ENCODE measurements at regions of chrX and their contacts with region 1.

Region 1: DNA sequence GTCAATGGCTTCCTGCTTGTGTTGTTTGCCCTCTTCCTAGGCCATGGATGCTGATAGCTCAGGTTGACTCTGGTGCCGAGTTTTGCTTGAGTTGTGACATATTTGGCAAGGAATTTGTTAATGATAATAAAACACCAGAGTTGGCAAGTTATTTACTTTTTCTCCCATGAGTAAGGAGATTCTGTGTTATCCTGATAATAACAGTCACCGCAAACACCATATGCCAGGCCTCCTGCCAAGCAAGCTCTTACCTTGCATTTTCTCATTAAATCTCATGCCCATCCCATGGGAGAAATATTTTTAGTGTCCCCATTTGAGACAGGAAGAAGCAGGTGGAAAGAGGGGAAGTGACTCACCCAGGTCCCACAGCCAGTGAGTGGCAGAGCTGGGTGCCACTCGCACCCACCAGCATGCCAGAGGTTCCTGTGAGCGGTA is 67.4 kb upstream of the CLCN4 start:
- DNase-seq: peak; percentile 9
- H3K4me3 ChIP-seq: no peak overlapping the region
- H3K27ac ChIP-seq: peak overlapping the region; percentile 48
- H3K4me1 ChIP-seq: peaks cover 28% of the 10 kb centered on the region
- H3K27me3 ChIP-seq: no peaks in the 10 kb centered on the region
- CTCF ChIP-seq: no peak
- POLR2A ChIP-seq: no peak

Region 2: DNA sequence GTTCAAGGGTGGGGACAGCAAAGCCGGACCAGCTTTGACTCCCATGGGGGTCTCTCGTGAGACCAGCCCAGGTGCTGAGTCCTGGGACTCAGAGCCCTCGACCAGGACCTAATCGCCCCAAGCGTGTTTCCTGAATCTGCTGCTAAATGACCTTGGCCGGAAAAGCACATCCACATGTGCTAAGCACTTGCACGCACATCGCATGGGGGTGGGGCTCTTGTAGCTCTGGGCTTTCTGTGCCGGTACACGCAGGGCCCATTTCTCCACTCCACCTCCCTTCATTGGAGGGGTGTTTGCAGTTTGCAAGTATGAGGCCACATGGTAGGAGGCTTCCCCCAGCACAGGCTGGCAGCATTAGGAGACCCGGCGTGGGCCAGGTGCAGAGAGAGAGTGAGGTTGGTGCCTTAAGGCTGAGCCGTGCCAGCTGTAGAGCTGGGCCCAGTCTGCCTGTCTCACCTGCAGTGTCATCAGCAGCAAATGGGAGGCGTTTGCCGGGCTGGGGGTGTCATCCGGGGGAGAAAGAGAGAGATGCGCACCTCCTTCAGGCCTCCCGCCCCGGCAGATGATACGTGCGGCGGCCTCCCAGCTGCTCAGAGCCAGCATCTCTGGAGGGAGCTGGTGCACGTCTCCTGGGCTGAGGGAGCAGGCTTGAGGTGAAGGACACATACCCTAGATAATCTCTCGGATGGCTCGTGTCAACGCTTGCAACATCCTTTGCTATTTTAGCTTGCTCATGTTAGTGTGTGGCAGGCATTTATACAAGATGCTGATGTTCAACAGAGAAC is 22.2 kb after region 1 on chrX:
- CTCF ChIA-PET with region 1: no interaction called
- POLR2A ChIA-PET with region 1: no interaction called
- dilution Hi-C with region 1: no loop called
- intact Hi-C with region 1: loop called (anchors 1 kb)
- DNase-seq: peak; percentile 17
- H3K4me3 ChIP-seq: no peak overlapping the region
- H3K27ac ChIP-seq: peak overlapping the region; percentile 43
- H3K4me1 ChIP-seq: peaks cover 15% of the 10 kb centered on the region
- H3K27me3 ChIP-seq: no peaks in the 10 kb centered on the region
- CTCF ChIP-seq: no peak
- POLR2A ChIP-seq: no peak